CD8-positive, alpha-beta memory T cell (primary cell): ENCODE measurements at regions of chr2 and their contacts with region 1.

Region 1: DNA sequence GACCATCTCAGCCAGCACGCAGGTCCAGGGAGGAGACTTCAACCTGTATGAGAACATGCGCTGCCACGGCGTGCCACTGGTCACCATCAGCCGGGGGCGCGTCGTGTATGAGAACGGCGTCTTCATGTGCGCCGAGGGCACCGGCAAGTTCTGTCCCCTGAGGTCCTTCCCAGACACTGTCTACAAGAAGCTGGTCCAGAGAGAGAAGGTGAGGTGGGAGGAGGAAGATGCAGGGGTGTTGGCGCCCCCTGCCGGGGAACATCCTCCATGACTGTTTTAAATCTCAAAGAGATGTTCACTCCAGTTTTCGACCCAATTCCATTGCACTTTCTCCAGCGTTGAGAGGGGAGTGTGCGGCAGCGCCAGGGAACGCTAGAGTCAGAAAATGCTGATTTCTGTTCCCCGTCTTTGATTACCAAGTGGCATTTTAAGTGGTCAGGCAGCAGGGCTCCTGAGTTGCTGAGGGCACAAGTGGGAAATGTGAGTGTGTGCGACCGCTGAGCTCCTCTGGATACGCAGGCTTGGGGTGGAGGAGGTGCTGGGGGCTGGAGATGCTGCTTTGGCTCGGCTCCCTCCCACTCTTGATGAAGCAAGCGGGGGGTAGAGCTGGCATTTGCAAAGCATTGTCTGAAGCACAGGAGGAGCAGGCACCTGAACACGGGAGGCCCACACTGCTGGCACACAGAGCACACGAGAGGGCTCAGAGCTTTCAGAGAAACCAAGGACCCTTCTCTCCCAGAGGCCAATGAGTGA is 27.7 kb upstream of the MAPRE3 start:
- DNase-seq: peak; percentile 30 to 62 (median 38)
- H3K4me3 ChIP-seq: no peak overlapping the region
- H3K4me3 Mint-ChIP-seq: no peak overlapping the region
- H3K27ac ChIP-seq: no peak overlapping the region
- H3K27ac Mint-ChIP-seq: peak overlapping the region in 1 of 8 donors; percentile 61
- H3K4me1 ChIP-seq: no peaks in the 10 kb centered on the region
- H3K4me1 Mint-ChIP-seq: peaks cover 0 to 4% (median 3%) of the 10 kb centered on the region in 3 donors
- H3K27me3 ChIP-seq: no peaks in the 10 kb centered on the region
- H3K27me3 Mint-ChIP-seq: peaks cover 14 to 21% of the 10 kb centered on the region in 2 donors

Region 2: DNA sequence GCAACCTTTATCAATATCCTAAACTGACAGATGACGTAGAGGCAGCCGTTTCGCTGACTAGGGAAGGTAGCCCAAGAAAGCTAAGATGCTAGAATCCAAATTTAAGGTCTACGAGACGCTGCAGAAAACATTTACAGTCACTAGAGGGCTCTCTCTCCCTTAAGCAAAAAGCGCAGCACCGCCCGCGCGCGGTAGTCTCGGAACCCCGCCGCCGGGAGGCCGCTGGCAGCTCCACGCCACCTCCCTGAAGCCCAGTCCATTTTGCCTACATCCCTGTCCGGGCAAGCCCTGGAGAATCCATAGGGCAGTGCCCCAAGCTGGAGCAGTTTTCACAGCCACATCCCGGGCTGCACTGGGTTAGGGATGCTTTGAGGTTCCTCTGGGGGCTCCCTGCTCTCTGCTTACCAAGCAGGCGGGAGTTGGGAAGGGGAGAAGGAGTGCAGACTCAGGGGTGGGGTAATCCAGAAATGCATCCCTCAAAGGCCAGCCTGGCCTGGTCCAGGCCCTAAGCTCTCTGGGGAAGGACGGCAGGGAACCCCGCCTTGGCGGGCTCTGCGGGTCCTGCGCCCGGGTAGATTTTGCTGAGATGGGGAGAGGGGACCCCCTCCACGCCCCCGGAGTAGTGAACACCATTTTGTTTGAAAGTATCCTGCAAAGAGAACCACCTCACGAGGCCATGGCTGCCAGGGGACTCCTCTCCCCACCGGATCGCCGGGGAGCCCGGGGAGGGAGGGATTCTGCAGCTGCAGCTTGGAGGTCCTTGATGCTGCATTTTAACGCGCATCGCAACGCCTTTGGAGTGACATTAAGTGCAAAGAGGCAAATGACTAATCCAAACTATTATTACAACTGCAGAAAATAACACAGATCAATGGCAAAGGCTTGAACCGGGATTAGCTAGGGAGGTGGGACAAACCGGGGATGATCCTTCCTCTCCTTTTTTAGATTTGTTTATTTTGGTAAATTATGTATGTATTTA is 96.1 kb before region 1 on chr2:
- CTCF ChIA-PET with region 1: interaction called, 35 read pairs
- POLR2A ChIA-PET with region 1: no interaction called
- DNase-seq: peak; percentile 18 to 58 (median 44)
- H3K4me3 ChIP-seq: no peak overlapping the region
- H3K4me3 Mint-ChIP-seq: peak overlapping the region; percentile 66 to 87 (median 77)
- H3K27ac ChIP-seq: no peak overlapping the region
- H3K27ac Mint-ChIP-seq: peak overlapping the region in 2 of 8 donors; percentile 19 to 74
- H3K4me1 ChIP-seq: peaks cover 19% of the 10 kb centered on the region
- H3K4me1 Mint-ChIP-seq: peaks cover 11 to 22% (median 11%) of the 10 kb centered on the region in 3 donors
- H3K27me3 ChIP-seq: peaks cover 47% of the 10 kb centered on the region
- H3K27me3 Mint-ChIP-seq: peaks cover 38 to 59% of the 10 kb centered on the region in 2 donors